Activated CD4-positive, alpha-beta memory T cell treated with anti-CD3 and anti-CD28 coated beads for 36 hours (primary cell): ENCODE measurements at regions of chr11 and their contacts with region 1.

Region 1: GRCh38 chr11:35822815-35823495 is 120.9 kb upstream of the LDLRAD3 start:
- DNase-seq: no peak
- H3K4me3 Mint-ChIP-seq: no peak overlapping the region
- H3K27ac Mint-ChIP-seq: no peak overlapping the region
- H3K4me1 Mint-ChIP-seq: peaks cover 15% of the 10 kb centered on the region
- H3K27me3 Mint-ChIP-seq: no peaks in the 10 kb centered on the region

Region 2: GRCh38 chr11:35794850-35795249 is 28.1 kb before region 1 on chr11:
- CTCF ChIA-PET with region 1: interaction called, 22 read pairs
- POLR2A ChIA-PET with region 1: no interaction called
- intact Hi-C with region 1: no loop called
- DNase-seq: no peak
- H3K4me3 Mint-ChIP-seq: no peak overlapping the region
- H3K27ac Mint-ChIP-seq: no peak overlapping the region
- H3K4me1 Mint-ChIP-seq: peaks cover 4% of the 10 kb centered on the region
- H3K27me3 Mint-ChIP-seq: no peaks in the 10 kb centered on the region

Region 3: GRCh38 chr11:35811775-35812174 is 11.2 kb before region 1 on chr11:
- CTCF ChIA-PET with region 1: interaction called, 35 read pairs
- POLR2A ChIA-PET with region 1: no interaction called
- intact Hi-C with region 1: no loop called
- DNase-seq: no peak
- H3K4me3 Mint-ChIP-seq: no peak overlapping the region
- H3K27ac Mint-ChIP-seq: no peak overlapping the region
- H3K4me1 Mint-ChIP-seq: no peaks in the 10 kb centered on the region
- H3K27me3 Mint-ChIP-seq: no peaks in the 10 kb centered on the region

Region 4: GRCh38 chr11:36149538-36150242 is 326.7 kb after region 1 on chr11:
- CTCF ChIA-PET with region 1: interaction called, 3 read pairs
- POLR2A ChIA-PET with region 1: no interaction called
- intact Hi-C with region 1: loop called (anchors 10 kb)
- DNase-seq: peak; percentile 66
- H3K4me3 Mint-ChIP-seq: no peak overlapping the region
- H3K27ac Mint-ChIP-seq: no peak overlapping the region
- H3K4me1 Mint-ChIP-seq: peaks cover 10% of the 10 kb centered on the region
- H3K27me3 Mint-ChIP-seq: peaks cover 6% of the 10 kb centered on the region

Region 5: DNA sequence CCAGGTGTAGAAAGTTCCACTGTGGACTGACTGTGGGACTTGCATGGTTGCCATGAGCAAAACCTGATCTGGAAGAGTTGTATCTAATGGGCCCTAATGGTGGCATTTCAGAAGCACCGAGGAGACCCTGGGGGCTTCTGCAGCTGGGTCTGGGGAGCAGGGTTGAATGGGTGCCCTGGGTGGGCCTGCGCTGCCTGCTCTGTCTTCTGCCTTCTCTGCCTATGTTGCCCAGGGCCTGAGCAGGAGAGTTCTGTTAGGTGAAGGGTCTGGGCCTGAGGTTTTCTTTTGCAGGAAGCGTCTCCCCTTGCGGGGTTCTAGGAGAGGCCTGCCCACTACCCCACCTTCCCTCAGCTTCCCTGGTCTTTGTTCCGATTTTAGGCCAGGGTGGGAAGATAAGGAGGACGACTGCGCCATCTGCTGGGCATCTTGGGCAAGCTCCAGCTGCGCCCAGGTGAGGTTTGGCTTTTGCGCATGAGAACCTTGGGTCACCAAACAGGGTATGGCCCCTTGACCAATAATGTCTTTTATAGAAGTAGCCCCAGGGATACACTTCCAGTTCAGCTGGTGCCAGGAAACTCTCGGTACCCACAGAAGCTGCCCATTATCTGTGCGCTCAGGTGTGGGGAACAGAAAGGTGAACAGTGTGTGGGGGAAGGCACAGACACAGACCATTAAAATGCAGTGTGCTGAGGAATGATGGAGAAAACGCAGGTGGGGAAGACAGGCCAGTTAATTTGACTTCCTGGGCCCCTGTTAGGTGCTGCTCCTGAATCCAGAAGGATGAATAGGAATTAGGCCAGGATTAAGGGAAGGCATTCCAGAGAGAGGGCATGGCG is 443.1 kb after region 1 on chr11:
- CTCF ChIA-PET with region 1: interaction called, 25 read pairs
- POLR2A ChIA-PET with region 1: interaction called, 3 read pairs
- intact Hi-C with region 1: no loop called
- DNase-seq: peak; percentile 72
- H3K4me3 Mint-ChIP-seq: no peak overlapping the region
- H3K27ac Mint-ChIP-seq: no peak overlapping the region
- H3K4me1 Mint-ChIP-seq: no peaks in the 10 kb centered on the region
- H3K27me3 Mint-ChIP-seq: peaks cover 11% of the 10 kb centered on the region